Activated CD4-positive, alpha-beta memory T cell treated with anti-CD3 and anti-CD28 coated beads, Interleukin-2, amount 10 ng/mL, durations not matched to agents 7 days and 5 days (primary cell): ENCODE measurements at regions of chr12 and their contacts with region 1.

Region 1: GRCh38 chr12:119444456-119445044 is 110.0 kb downstream of the CCDC60 start:
- DNase-seq: peak; percentile 57
- H3K4me3 Mint-ChIP-seq: no peak overlapping the region
- H3K27ac Mint-ChIP-seq: no peak overlapping the region
- H3K4me1 Mint-ChIP-seq: no peaks in the 10 kb centered on the region
- H3K27me3 Mint-ChIP-seq: peaks cover 2% of the 10 kb centered on the region

Region 2: DNA sequence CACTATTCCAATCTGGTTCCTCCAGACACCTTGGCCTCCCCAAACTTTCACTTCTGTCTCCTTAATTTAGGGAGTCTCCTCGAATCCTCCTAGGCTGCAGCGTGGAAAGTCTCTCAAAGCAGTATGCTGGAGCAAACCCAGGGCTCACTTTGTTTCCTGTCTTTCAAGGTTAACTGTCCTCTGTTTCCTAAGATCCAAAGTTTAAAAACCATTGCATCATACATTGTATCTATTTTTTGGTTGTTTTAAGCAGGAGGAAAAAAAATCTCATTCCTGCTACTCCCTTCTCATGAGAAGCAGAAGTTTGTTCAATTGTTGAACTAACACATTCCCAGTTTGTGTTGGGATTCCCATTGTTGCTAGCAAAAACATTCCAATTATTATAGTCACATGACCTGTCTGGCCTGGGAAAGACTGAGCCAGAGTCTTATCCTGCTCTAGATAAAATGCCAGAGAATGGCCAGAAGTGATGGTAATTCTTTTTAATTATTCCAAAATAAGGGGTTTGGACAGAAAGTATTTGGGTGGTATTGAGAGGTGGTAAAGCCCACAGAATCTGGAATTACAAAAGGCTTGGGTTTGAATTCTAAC is 198.6 kb before region 1 on chr12:
- CTCF ChIA-PET with region 1: no interaction called
- POLR2A ChIA-PET with region 1: no interaction called
- DNase-seq: no peak
- H3K4me3 Mint-ChIP-seq: no peak overlapping the region
- H3K27ac Mint-ChIP-seq: no peak overlapping the region
- H3K4me1 Mint-ChIP-seq: no peaks in the 10 kb centered on the region
- H3K27me3 Mint-ChIP-seq: no peaks in the 10 kb centered on the region

Region 3: DNA sequence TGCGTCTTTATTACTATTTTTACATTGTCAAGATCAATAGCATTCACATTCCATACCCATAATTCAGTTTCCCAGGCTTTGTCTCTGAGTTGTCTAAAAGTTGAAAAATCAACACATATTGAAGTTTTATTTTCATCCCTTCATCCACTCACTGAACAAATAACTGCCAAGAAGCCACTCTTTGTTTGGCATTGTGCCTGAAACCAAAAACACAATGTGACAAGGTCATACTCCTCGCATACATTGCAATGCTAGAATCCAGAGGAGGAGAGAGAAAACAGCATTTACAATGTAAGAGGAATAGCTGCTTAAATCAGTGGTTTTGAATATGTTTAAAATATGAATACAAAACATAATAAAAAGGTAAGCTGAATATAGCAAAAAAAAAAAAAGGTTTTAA is 38.2 kb before region 1 on chr12:
- CTCF ChIA-PET with region 1: no interaction called
- POLR2A ChIA-PET with region 1: no interaction called
- DNase-seq: no peak
- H3K4me3 Mint-ChIP-seq: no peak overlapping the region
- H3K27ac Mint-ChIP-seq: no peak overlapping the region
- H3K4me1 Mint-ChIP-seq: no peaks in the 10 kb centered on the region
- H3K27me3 Mint-ChIP-seq: peaks cover 6% of the 10 kb centered on the region

Region 4: DNA sequence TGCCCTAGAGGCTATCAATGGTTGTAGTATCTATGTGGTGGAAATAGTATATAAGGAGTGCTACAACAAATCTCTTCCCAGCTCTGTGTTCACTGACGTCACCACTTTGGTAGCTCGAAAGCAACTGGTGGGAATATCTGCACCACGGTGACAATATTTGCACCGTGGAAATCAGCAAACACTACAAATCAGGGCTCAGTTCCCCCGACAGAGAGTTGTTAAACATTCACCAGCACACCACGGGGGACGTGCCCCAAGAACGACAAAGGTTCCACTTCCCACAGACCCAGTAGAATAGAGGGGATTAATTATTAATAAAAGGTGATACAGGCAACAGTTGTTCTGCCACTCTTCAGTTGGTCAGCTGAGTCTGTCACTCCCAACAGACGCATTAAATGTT is 11.6 kb before region 1 on chr12:
- CTCF ChIA-PET with region 1: interaction called, 19 read pairs
- POLR2A ChIA-PET with region 1: no interaction called
- DNase-seq: no peak
- H3K4me3 Mint-ChIP-seq: no peak overlapping the region
- H3K27ac Mint-ChIP-seq: no peak overlapping the region
- H3K4me1 Mint-ChIP-seq: no peaks in the 10 kb centered on the region
- H3K27me3 Mint-ChIP-seq: no peaks in the 10 kb centered on the region

Region 5: DNA sequence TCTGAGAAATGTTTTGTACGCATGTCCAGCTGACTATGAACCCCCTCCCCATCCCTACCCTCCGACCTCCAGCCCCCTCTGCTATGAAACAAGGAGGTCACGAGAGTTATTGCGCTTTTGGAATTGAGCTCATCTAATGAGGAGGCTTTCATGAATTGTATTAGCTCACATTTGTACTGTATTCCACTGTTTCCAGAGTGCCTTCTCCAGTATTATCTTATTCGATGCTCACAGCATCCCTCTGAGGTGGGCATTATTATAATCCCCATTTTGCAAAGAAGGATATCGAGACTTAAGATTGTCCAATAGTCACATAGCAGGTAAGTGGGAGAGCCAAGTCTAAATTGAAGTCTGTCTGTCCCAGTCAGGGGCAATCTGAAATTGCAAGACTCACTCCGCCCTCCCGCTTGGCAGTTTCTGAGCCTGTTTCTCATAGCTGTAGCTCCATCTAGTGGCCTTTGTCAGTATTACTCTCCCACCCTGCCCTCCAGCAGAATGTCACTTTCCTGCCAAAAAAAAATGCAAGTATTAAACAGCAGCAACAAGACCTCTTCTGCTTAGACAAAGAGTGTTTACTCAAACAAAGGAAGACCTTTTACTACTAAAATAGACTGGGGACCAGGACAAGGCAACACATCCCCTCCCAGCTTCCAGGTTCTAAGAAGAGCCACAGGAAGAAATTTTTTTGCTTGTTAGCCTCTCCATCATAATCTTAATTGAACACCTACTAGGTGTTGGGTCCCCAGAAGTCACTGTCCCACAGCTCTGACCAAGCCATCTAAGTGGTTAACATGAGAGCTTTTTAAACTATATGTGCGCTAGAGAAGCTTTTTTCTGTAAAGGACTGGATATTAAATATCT is 100.4 kb after region 1 on chr12:
- CTCF ChIA-PET with region 1: interaction called, 83 read pairs
- POLR2A ChIA-PET with region 1: no interaction called
- DNase-seq: peak; percentile 53
- H3K4me3 Mint-ChIP-seq: no peak overlapping the region
- H3K27ac Mint-ChIP-seq: no peak overlapping the region
- H3K4me1 Mint-ChIP-seq: no peaks in the 10 kb centered on the region
- H3K27me3 Mint-ChIP-seq: peaks cover 7% of the 10 kb centered on the region